HepG2 (cell line): ENCODE measurements at regions of chr1 and their contacts with region 1.

Region 1: GRCh38 chr1:202861420-202862200 is 27.3 kb downstream of the RABIF start:
- DNase-seq: peak; percentile 90
- ATAC-seq: peak; percentile 90
- H3K4me3 ChIP-seq: peak overlapping the region; percentile 79 to 91 (median 83)
- H3K27ac ChIP-seq: peak overlapping the region; percentile 95
- H3K4me1 ChIP-seq: peaks cover 61% of the 10 kb centered on the region
- H3K27me3 ChIP-seq: no peaks in the 10 kb centered on the region; a peak in 1 of 5 replicates
- CTCF ChIP-seq: no peak
- EP300 ChIP-seq: no peak
- POLR2A ChIP-seq: peak; percentile 80 to 95; a peak in 3 of 4 replicates
- RAD21 ChIP-seq: 0 out of 2 replicates have a peak, but pooled peaks have one; percentile 6

Region 2: DNA sequence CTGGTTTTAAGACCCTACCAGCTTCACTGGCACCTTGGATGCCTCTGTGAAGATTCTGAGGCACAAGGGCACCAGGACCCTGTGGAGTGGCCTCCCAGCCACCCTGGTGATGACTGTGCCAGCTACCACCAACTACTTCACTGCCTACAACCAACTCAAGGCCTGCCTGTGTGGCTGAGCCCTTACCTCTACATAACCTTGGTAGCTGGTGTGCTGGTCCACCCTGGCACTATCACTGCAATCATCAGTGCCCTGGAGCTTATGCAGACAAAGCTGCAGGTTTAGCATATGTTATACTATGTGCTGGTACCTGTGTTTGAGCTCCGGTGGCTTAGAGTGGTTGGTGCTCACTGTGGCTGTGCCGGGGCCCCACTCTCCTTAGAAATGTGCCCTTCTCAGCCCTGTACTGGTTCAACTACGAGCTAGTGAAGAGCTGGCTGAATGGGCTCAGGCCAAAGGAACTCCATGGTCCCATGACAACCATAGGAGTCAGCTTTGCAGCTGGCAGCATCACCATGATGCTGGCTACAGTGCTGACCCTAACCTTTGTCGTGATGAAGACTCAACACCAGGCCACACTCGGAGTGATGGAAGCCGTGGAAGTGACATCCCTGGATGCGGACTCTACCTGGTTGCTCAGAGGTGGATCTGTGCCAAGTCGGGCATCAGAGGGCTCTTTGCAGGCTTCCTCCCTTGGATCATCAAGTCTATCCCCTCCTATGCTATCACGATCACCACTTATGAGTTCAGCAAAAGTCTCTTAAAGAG is 65.1 kb before region 1 on chr1:
- CTCF ChIA-PET with region 1: no interaction called
- POLR2A ChIA-PET with region 1: no interaction called
- in situ Hi-C with region 1: no loop called
- intact Hi-C with region 1: no loop called
- DNase-seq: no peak
- ATAC-seq: no peak
- H3K4me3 ChIP-seq: no peak overlapping the region
- H3K27ac ChIP-seq: no peak overlapping the region
- H3K4me1 ChIP-seq: no peaks in the 10 kb centered on the region
- H3K27me3 ChIP-seq: no peaks in the 10 kb centered on the region
- CTCF ChIP-seq: no peak
- EP300 ChIP-seq: no peak
- POLR2A ChIP-seq: no peak
- RAD21 ChIP-seq: no peak

Region 3: DNA sequence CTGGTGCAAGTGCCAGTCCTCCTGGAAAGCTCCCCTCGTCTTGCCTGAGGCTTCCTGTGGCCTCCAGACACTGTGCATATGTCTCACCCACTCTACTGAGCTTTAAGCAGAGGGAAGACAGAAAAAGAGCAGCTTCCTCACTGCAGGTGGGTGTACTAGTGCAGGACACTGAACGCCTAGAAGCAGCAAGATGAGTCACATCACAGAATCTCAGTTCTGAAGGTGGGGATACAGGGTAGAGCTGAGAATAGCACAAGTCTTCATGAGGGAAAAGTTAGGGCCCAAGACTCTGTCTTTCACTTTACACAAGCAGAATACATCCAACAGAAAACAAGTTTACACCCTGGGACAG is 13.4 kb before region 1 on chr1:
- CTCF ChIA-PET with region 1: no interaction called
- POLR2A ChIA-PET with region 1: interaction called, 33 read pairs
- in situ Hi-C with region 1: no loop called
- intact Hi-C with region 1: no loop called
- DNase-seq: no peak
- ATAC-seq: peak; percentile 19
- H3K4me3 ChIP-seq: no peak overlapping the region
- H3K27ac ChIP-seq: peak overlapping the region; percentile 41
- H3K4me1 ChIP-seq: peaks cover 50% of the 10 kb centered on the region
- H3K27me3 ChIP-seq: no peaks in the 10 kb centered on the region
- CTCF ChIP-seq: no peak
- EP300 ChIP-seq: no peak
- POLR2A ChIP-seq: no peak
- RAD21 ChIP-seq: no peak

Region 4: GRCh38 chr1:202888531-202889360 is 27.1 kb after region 1 on chr1 and contains the start of gene RABIF:
- CTCF ChIA-PET with region 1: no interaction called
- POLR2A ChIA-PET with region 1: interaction called, 42 read pairs
- in situ Hi-C with region 1: no loop called
- intact Hi-C with region 1: no loop called
- DNase-seq: peak; percentile 93
- ATAC-seq: peak; percentile 97
- H3K4me3 ChIP-seq: peak within 1 kb of the TSS; percentile 78 to 93 (median 89)
- H3K27ac ChIP-seq: peak within 1 kb of the TSS; percentile 95
- H3K4me1 ChIP-seq: peaks cover 15% of the 10 kb centered on the region
- H3K27me3 ChIP-seq: no peaks in the 10 kb centered on the region
- CTCF ChIP-seq: peak; percentile 48
- EP300 ChIP-seq: no peak
- POLR2A ChIP-seq: peak; percentile 95 to 96
- RAD21 ChIP-seq: peak; percentile 33
- total RNA-seq, gene RABIF: 8.3 and 11.1 TPM in 2 replicates

Region 5: GRCh38 chr1:202938287-202938925 is 76.8 kb after region 1 on chr1:
- CTCF ChIA-PET with region 1: no interaction called
- POLR2A ChIA-PET with region 1: no interaction called
- in situ Hi-C with region 1: no loop called
- intact Hi-C with region 1: no loop called
- DNase-seq: no peak
- ATAC-seq: no peak; the same call in 2 of the 3 replicates
- H3K4me3 ChIP-seq: no peak overlapping the region
- H3K27ac ChIP-seq: no peak overlapping the region
- H3K4me1 ChIP-seq: no peaks in the 10 kb centered on the region
- H3K27me3 ChIP-seq: no peaks in the 10 kb centered on the region
- CTCF ChIP-seq: no peak
- EP300 ChIP-seq: no peak
- POLR2A ChIP-seq: no peak
- RAD21 ChIP-seq: no peak